Activated CD4-positive, alpha-beta T cell treated with anti-CD3 and anti-CD28 coated beads, Interleukin-2, amount 10 ng/mL, durations not matched to agents 24 days and 14 days (primary cell): ENCODE measurements at regions of chr2 and their contacts with region 1.

Region 1: DNA sequence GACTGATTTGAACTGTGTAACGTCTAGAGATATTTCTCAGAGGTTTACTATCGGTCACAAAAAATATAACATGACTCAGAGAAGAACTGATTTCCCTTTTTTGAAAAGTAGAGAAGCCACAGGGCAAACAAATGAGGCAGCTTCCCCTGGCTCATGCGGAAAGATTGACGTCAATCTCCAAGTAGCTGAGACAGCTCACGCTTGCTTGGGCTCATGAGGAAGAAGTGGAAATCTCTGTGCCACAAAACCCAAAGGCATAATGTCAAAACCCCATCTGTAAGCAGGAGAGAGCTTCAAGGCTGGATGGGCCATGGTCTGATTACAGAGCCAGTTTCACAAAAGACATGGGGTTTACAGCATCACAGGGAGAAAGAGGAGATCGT is 188.1 kb downstream of the ARL4C start:
- DNase-seq: peak; percentile 94
- H3K4me3 Mint-ChIP-seq: peak overlapping the region; percentile 66
- H3K27ac Mint-ChIP-seq: peak overlapping the region; percentile 97
- H3K4me1 Mint-ChIP-seq: peaks cover 54% of the 10 kb centered on the region
- H3K27me3 Mint-ChIP-seq: no peaks in the 10 kb centered on the region

Region 2: GRCh38 chr2:234269769-234270204 is 39.0 kb before region 1 on chr2:
- intact Hi-C with region 1: loop called (anchors 1 kb)
- DNase-seq: no peak
- H3K4me3 Mint-ChIP-seq: no peak overlapping the region
- H3K27ac Mint-ChIP-seq: peak overlapping the region; percentile 73
- H3K4me1 Mint-ChIP-seq: peaks cover 68% of the 10 kb centered on the region
- H3K27me3 Mint-ChIP-seq: no peaks in the 10 kb centered on the region

Region 3: GRCh38 chr2:234296991-234297390 is 11.8 kb before region 1 on chr2:
- intact Hi-C with region 1: loop called (anchors 1 kb)
- DNase-seq: no peak
- H3K4me3 Mint-ChIP-seq: no peak overlapping the region
- H3K27ac Mint-ChIP-seq: peak overlapping the region; percentile 71
- H3K4me1 Mint-ChIP-seq: peaks cover 78% of the 10 kb centered on the region
- H3K27me3 Mint-ChIP-seq: no peaks in the 10 kb centered on the region

Region 4: GRCh38 chr2:234368861-234369261 is 60.1 kb after region 1 on chr2:
- intact Hi-C with region 1: loop called (anchors 1 kb)
- DNase-seq: peak; percentile 85
- H3K4me3 Mint-ChIP-seq: peak overlapping the region; percentile 10
- H3K27ac Mint-ChIP-seq: peak overlapping the region; percentile 69
- H3K4me1 Mint-ChIP-seq: peaks cover 69% of the 10 kb centered on the region
- H3K27me3 Mint-ChIP-seq: no peaks in the 10 kb centered on the region

Region 5: DNA sequence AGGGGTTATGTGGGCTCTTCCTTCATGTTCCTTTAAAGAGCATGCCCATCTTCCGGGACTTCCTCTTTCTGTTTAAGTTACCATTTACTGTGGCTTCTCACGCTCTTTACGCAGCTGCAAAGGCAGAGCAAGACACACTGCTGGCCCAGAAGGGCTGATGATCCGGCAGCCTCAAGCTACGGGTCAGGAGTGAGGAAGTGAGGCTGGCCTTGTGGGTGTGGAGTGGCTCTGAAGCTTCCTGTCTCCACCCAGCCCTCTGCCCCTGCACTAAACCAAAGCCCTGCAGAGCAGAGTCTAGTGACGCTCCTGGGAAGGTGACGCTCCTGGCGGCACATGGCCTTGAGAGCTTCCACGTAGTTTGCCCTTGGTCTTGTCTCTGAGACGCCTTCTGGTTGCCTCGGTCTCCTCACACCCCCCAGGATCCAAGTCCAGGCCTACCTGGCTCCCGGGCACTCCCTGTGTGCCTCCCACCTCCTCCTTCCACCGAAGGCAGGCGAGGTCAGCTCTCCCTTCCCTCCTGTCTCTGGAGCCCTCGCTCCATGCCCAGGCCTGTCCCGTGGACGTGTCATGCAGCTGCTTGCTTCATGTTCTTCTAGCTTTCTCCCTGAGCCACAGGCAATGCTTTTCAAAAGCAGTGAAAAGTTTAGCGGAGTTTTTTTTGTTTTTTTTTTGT is 137.7 kb after region 1 on chr2:
- intact Hi-C with region 1: loop called (anchors 1 kb)
- DNase-seq: peak; percentile 96
- H3K4me3 Mint-ChIP-seq: peak overlapping the region; percentile 85
- H3K27ac Mint-ChIP-seq: peak overlapping the region; percentile 100
- H3K4me1 Mint-ChIP-seq: peaks cover 80% of the 10 kb centered on the region
- H3K27me3 Mint-ChIP-seq: no peaks in the 10 kb centered on the region